Left lung (tissue), 14 donors: ENCODE measurements at regions of chr12 and their contacts with region 1.

Region 1: GRCh38 chr12:30985814-30986452 is 59.4 kb downstream of the TSPAN11 start:
- DNase-seq: peak in 3 of 4 donors; percentile 33 to 60 (median 54)
- ATAC-seq: peak; percentile 90
- H3K4me3 ChIP-seq: no peak overlapping the region
- H3K27ac ChIP-seq: no peak overlapping the region
- H3K4me1 ChIP-seq: peaks cover 3 to 6% of the 10 kb centered on the region in 2 donors
- H3K27me3 ChIP-seq: no peaks in the 10 kb centered on the region
- CTCF ChIP-seq: peak; percentile 52 to 60

Region 2: DNA sequence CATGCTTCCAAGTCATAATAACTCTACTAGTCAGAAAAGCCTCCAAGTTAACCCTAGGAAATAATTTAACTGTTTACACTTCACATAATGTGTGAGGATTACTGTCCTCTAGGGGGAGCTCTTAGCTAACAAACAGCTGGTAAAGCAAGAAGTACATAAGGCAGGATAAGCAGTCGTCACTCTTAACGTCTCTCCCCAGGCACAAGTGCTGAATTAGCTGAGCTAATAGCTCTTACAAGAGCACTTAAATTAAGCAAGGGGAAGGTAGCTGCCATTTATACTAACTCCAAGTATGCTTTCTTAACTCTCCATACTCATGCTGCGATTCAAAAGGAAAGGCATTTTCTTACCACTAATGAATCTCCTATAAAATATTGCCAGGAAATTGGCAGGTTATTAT is 138.7 kb before region 1 on chr12:
- intact Hi-C with region 1: loop called in 1 of 2 experiments (anchors 10 kb)
- DNase-seq: peak in 1 of 4 donors; percentile 31
- ATAC-seq: peak; percentile 57
- H3K4me3 ChIP-seq: no peak overlapping the region
- H3K27ac ChIP-seq: no peak overlapping the region
- H3K4me1 ChIP-seq: no peaks in the 10 kb centered on the region
- H3K27me3 ChIP-seq: peaks cover 0 to 6% of the 10 kb centered on the region in 2 donors
- CTCF ChIP-seq: peak; percentile 56 to 70

Region 3: DNA sequence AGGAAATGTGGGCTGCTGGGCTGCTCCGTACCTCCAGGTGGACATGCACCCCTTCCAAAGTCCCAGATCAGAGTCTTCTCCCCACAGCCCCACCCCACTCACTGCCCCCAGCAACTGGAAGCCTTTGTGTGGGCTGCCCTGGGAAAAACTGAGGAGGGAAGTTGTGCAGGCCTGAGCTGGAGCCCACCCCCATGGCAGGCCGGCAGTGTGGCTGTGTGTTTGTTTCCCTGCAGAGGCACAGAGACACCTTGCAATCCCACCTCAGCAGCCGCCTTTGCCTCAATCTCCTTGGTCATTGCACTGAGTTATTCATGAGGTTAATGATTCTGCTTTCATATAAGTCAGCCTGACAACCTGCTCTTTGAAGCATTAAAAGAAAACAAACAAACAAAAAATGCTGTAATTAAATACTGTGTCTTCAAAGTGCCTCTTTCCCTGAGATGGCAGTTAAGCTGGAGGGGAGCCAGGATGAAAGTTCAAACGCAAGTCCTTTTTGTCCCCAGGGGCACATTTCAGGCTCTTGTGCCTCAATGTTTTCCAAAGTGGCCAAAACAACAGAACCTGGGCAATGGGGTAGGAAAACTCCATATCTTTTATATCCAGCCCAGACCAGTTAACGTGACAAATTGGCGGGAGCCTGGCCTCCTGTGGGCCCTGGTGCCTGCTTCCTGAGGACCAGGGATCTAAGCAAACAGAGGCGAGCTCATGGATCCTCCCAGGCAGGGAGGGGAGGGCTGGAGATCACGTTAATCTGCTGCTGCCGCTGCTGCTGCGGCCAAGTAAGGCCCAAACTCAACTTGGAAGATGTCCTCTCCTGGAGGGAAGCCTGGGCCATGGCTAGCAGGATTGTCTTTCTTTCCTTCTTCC is 111.2 kb before region 1 on chr12:
- intact Hi-C with region 1: loop called in 1 of 2 experiments (anchors 10 kb)
- DNase-seq: no peak
- ATAC-seq: no peak
- H3K4me3 ChIP-seq: no peak overlapping the region
- H3K27ac ChIP-seq: no peak overlapping the region
- H3K4me1 ChIP-seq: no peaks in the 10 kb centered on the region
- H3K27me3 ChIP-seq: peaks cover 0 to under 1% of the 10 kb centered on the region in 2 donors
- CTCF ChIP-seq: no peak